ENCODE measurements at regions of chr1 and their contacts with region 1.

Region 1: DNA sequence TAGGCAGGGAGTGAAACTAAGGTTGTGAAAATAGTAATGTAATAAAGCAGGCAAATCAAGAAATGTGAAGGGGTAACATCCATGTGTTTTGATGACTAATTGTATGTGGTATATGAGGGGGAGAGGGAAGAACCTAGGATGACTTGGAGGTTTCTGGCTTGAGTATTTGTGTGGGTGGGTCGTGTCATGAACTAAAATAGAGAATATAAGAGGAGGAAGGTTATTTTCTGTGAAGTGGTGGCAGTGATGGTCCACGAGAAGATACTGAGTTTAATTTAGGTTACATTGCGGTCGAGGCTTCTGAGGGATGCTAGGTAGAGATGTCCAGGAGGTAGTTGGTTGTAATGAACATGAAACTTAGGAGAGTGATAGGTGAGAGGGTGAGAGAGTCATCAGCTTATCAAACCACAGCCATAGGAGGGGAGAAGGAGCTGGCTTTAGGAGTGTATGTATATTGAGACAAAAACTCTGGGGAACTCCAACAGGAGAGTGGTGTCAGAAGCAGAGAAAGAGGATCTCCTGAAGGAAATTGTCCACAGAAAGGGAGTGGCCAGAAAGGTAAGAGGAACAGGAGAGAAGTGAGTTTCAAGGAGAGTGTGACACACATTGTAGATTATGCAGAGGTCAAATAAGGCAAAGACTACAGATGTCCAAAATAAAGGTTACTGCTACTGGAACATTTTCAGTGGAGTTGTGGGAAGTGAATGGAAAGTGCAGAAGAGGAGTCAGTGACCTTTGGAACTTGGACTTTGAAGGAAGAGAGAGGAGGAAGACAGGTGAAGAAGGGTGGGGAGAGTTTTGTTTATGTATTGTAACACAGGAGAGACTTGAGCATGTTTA is 89.0 kb upstream of the MACF1 start:
- DNase-seq: no peak
- ATAC-seq: no peak
- H3K4me3 ChIP-seq: no peak overlapping the region
- H3K27ac ChIP-seq: 0 out of 2 replicates have a peak overlapping the region, but pooled peaks have one; percentile 5
- H3K4me1 ChIP-seq: peaks cover 55% of the 10 kb centered on the region
- H3K27me3 ChIP-seq: no peaks in the 10 kb centered on the region
- CTCF ChIP-seq: no peak

Region 2: GRCh38 chr1:38885092-38885491 is 230.4 kb before region 1 on chr1:
- CTCF ChIA-PET with region 1: no interaction called
- POLR2A ChIA-PET with region 1: no interaction called
- in situ Hi-C with region 1: no loop called
- intact Hi-C with region 1: no loop called
- DNase-seq: no peak
- ATAC-seq: no peak
- H3K4me3 ChIP-seq: no peak overlapping the region
- H3K27ac ChIP-seq: no peak overlapping the region
- H3K4me1 ChIP-seq: no peaks in the 10 kb centered on the region
- H3K27me3 ChIP-seq: no peaks in the 10 kb centered on the region
- CTCF ChIP-seq: no peak

Region 3: GRCh38 chr1:39003794-39004193 is 111.7 kb before region 1 on chr1:
- CTCF ChIA-PET with region 1: no interaction called
- POLR2A ChIA-PET with region 1: no interaction called
- in situ Hi-C with region 1: no loop called
- intact Hi-C with region 1: no loop called
- DNase-seq: no peak
- ATAC-seq: no peak
- H3K4me3 ChIP-seq: no peak overlapping the region
- H3K27ac ChIP-seq: no peak overlapping the region
- H3K4me1 ChIP-seq: no peaks in the 10 kb centered on the region
- H3K27me3 ChIP-seq: no peaks in the 10 kb centered on the region
- CTCF ChIP-seq: no peak

Region 4: GRCh38 chr1:39214021-39214713 is 98.7 kb after region 1 on chr1:
- CTCF ChIA-PET with region 1: no interaction called
- POLR2A ChIA-PET with region 1: interaction called, 11 read pairs
- in situ Hi-C with region 1: no loop called
- intact Hi-C with region 1: no loop called
- DNase-seq: no peak
- ATAC-seq: peak; percentile 67
- H3K4me3 ChIP-seq: no peak overlapping the region
- H3K27ac ChIP-seq: peak overlapping the region; percentile 76
- H3K4me1 ChIP-seq: peaks cover 37% of the 10 kb centered on the region
- H3K27me3 ChIP-seq: no peaks in the 10 kb centered on the region
- CTCF ChIP-seq: no peak

Measured in Panc1 (cell line).